CD4-positive, alpha-beta T cell (primary cell): ENCODE measurements at regions of chr19 and their contacts with region 1.

Region 1: DNA sequence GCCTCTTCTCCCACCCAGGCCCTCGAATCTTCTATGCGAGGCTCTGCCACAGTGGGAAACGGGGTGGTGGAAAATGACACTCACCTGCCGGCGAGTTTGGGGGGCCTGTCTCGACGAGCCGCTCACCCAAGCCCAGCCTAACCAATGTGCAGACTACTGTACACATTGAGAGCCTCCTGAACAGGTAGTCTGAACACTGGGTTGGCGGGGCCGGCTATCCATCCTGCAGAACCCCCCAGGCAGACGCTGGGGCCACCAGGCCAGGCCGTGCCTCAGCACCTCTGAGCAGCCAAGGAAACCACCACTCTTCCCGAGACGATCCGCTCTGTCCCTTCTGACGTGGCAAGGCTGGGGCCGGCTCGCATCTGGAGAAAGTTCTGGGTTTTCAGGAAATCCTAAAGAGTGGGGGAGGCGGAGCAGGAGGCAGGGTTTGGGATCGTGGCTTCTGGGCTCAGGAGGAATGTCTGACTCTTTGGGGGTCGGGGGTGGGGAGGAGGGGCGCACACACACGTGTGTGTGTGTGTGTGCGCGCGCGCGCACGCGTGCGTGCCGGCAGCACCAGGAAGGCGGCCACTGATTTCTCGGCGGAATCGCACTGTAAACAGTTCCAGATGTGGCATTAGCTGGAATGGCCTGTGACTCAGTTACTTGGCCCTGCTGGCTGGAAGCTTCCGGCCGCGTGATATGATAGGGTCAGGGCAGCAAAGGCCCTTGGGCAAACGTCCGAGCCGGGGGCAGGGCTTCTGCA is 18.5 kb downstream of the TMED1 start:
- DNase-seq: peak in 1 of 14 experiments; percentile 15
- ATAC-seq: no peak
- H3K4me3 ChIP-seq: no peak overlapping the region
- H3K4me3 Mint-ChIP-seq: no peak overlapping the region
- H3K27ac ChIP-seq: no peak overlapping the region
- H3K27ac Mint-ChIP-seq: no peak overlapping the region
- H3K4me1 ChIP-seq: peaks cover 16% of the 10 kb centered on the region
- H3K4me1 Mint-ChIP-seq: peaks cover 6% of the 10 kb centered on the region
- H3K27me3 ChIP-seq: no peaks in the 10 kb centered on the region
- H3K27me3 Mint-ChIP-seq: no peaks in the 10 kb centered on the region
- CTCF ChIP-seq: no peak

Region 2: DNA sequence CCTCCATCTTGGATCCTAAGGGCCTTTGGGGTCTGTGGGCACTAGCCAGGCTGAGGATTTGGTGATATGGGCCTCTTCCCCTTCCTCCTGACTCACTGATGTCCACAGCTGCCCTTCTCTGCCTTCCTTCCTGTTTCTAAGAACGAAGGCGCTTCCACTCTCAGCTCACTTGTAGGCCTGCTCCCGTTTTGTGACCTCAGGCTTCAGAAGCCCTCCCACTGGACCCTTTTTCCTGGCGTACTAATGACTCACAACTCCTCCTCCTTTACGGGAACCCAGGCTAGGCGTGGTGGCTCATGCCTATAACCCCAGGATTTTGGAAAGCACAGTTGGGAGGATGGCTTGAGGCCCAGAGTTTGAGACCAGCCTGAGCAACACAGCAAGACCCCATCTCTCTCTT is 37.1 kb before region 1 on chr19:
- CTCF ChIA-PET with region 1: no interaction called
- POLR2A ChIA-PET with region 1: no interaction called
- intact Hi-C with region 1: loop called in 1 of 2 experiments (anchors 5 kb)
- DNase-seq: peak in 2 of 14 experiments; percentile 59 to 67
- ATAC-seq: no peak
- H3K4me3 ChIP-seq: no peak overlapping the region
- H3K4me3 Mint-ChIP-seq: no peak overlapping the region
- H3K27ac ChIP-seq: no peak overlapping the region
- H3K27ac Mint-ChIP-seq: no peak overlapping the region
- H3K4me1 ChIP-seq: peaks cover 7% of the 10 kb centered on the region
- H3K4me1 Mint-ChIP-seq: peaks cover 6% of the 10 kb centered on the region
- H3K27me3 ChIP-seq: no peaks in the 10 kb centered on the region
- H3K27me3 Mint-ChIP-seq: no peaks in the 10 kb centered on the region
- CTCF ChIP-seq: no peak